Endothelial cell of umbilical vein (primary cell): ENCODE measurements at regions of chr4 and their contacts with region 1.

Region 1: DNA sequence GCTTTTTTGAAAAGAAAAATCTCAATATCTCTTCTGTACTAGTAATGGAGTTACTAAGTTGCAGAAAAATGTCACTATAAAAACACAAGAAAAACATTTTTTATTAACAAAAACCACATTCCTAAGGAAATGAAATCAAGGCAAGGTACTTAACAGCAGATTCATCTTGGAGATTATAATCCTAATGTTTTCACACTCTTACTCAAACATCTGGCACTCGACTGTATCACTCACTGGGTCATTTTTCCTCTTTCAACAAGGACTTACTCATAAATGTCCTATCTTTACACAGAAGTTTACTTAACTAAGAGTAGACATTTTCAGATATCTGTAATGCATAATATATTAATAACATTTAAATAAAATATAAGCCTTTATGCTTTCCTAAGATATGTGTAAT is 216.6 kb downstream of the NR3C2 start:
- DNase-seq: peak; percentile 70
- H3K4me3 ChIP-seq: no peak overlapping the region
- H3K27ac ChIP-seq: no peak overlapping the region
- H3K4me1 ChIP-seq: peaks cover 19% of the 10 kb centered on the region
- H3K27me3 ChIP-seq: no peaks in the 10 kb centered on the region
- CTCF ChIP-seq: no peak
- POLR2A ChIP-seq: no peak

Region 2: GRCh38 chr4:148214529-148215166 is 11.0 kb before region 1 on chr4:
- CTCF ChIA-PET with region 1: interaction called, 10 read pairs
- POLR2A ChIA-PET with region 1: no interaction called
- dilution Hi-C with region 1: no loop called
- intact Hi-C with region 1: no loop called
- DNase-seq: peak; percentile 12
- H3K4me3 ChIP-seq: no peak overlapping the region
- H3K27ac ChIP-seq: no peak overlapping the region
- H3K4me1 ChIP-seq: no peaks in the 10 kb centered on the region
- H3K27me3 ChIP-seq: no peaks in the 10 kb centered on the region
- CTCF ChIP-seq: no peak
- POLR2A ChIP-seq: no peak

Region 3: DNA sequence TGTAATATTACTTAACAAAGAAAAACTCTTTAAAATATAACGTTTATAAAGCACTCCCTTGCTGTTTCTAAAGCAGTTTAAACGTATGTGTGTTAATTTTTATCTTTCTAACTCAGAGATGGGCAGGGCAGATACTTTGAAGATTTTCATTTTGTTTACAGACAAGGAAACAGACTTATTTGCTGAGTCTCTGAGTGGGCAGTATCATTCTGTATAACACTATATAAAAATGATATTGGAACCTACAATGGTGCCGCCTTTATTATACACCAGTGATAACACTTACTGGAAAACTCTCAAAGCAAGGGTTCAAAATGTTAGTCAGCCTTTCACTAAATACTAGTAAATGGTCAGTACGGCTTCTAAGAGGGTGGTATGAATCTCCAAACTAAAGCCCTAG is 23.2 kb after region 1 on chr4:
- CTCF ChIA-PET with region 1: no interaction called
- POLR2A ChIA-PET with region 1: no interaction called
- dilution Hi-C with region 1: no loop called
- intact Hi-C with region 1: no loop called
- DNase-seq: no peak
- H3K4me3 ChIP-seq: no peak overlapping the region
- H3K27ac ChIP-seq: no peak overlapping the region
- H3K4me1 ChIP-seq: no peaks in the 10 kb centered on the region
- H3K27me3 ChIP-seq: no peaks in the 10 kb centered on the region
- CTCF ChIP-seq: no peak
- POLR2A ChIP-seq: no peak